HepG2 (cell line): ENCODE measurements at regions of chr6 and their contacts with region 1.

Region 1: GRCh38 chr6:138588805-138589434 is 89.6 kb upstream of the NHSL1 start:
- DNase-seq: peak; percentile 80
- ATAC-seq: peak; percentile 41
- H3K4me3 ChIP-seq: no peak overlapping the region
- H3K27ac ChIP-seq: no peak overlapping the region
- H3K4me1 ChIP-seq: peaks cover 61% of the 10 kb centered on the region
- H3K27me3 ChIP-seq: no peaks in the 10 kb centered on the region
- CTCF ChIP-seq: peak; percentile 94
- EP300 ChIP-seq: no peak
- POLR2A ChIP-seq: no peak
- RAD21 ChIP-seq: peak; percentile 86

Region 2: GRCh38 chr6:138115877-138116660 is 472.9 kb before region 1 on chr6:
- CTCF ChIA-PET with region 1: interaction called, 3 read pairs
- POLR2A ChIA-PET with region 1: no interaction called
- in situ Hi-C with region 1: loop called (anchors 5 kb)
- intact Hi-C with region 1: loop called (anchors 5 kb)
- DNase-seq: peak; percentile 71
- ATAC-seq: peak; percentile 96
- H3K4me3 ChIP-seq: 0 out of 6 replicates have a peak overlapping the region, but pooled peaks of 1 of the 3 experiments have one; percentile 2
- H3K27ac ChIP-seq: peak overlapping the region; percentile 13
- H3K4me1 ChIP-seq: peaks cover 18% of the 10 kb centered on the region
- H3K27me3 ChIP-seq: no peaks in the 10 kb centered on the region
- CTCF ChIP-seq: peak; percentile 90
- EP300 ChIP-seq: no peak
- POLR2A ChIP-seq: no peak
- RAD21 ChIP-seq: peak; percentile 92

Region 3: DNA sequence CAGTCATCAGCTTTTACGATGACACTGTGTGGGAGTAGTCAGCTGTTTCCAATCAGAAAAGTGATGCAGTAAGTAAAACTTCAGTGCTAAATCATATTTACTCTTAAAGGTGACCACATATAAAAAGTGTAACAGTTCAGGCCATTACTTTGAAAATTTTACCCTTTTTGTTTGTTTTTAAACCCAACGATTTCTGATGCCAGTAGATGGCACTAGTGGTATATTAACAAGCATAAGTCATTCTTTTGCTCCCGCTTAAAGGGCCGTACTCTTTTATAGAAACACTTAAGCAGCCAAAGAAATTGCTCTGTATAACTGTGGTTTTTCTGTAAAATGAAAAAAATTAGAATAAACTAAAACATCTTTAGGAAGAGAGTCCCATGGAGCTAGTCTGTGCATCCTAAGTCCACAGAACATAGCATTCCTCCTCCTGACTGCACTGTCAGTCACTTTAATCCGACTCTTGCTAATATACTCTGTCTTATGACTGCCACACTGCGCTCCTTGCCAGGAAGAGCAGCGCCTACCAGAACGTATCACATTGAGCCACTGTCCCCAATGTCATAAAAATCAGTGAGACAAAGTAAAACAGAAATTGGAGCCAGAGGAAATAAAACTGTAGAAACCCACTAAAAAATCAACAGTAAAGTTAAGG is 159.8 kb before region 1 on chr6:
- CTCF ChIA-PET with region 1: interaction called, 20 read pairs
- POLR2A ChIA-PET with region 1: no interaction called
- in situ Hi-C with region 1: loop called (anchors 5 kb)
- intact Hi-C with region 1: loop called (anchors 2 kb)
- DNase-seq: peak; percentile 62
- ATAC-seq: peak; percentile 26
- H3K4me3 ChIP-seq: no peak overlapping the region
- H3K27ac ChIP-seq: no peak overlapping the region
- H3K4me1 ChIP-seq: no peaks in the 10 kb centered on the region
- H3K27me3 ChIP-seq: no peaks in the 10 kb centered on the region
- CTCF ChIP-seq: peak; percentile 67
- EP300 ChIP-seq: no peak
- POLR2A ChIP-seq: no peak
- RAD21 ChIP-seq: peak; percentile 54; the same call in 1 of the 2 replicates

Region 4: DNA sequence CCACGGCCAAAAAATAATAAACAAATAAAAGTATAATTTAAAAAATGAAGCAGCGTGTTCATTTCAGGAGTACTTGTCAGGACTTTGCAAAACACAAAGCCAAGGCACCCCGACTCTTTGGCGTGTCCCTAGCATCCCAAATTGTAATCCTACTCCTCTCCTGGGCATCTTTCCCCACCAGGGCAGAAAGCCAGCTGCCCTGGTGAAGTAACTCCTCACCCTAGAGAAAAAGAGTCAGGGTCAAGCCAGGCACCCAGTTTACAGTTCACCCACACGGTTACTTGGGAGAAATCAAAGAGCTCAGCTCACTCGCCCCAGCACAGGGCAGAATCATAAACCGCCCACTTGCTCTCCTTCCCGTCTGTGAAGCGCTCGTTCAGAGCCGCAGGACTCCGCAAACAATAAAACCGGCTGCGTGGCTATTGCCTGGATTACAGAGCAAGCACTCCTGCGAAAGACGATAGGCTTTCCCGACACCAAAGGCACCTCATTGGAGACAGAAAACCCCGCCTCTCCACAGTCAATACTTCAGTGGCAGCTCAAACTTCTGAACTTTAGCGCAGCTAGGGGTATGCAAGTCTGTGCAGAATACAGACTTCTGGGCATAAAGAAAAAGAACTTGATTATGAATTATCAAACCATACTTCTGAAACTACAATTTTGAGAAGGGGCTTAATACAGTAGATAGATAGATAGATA is 16.6 kb before region 1 on chr6:
- CTCF ChIA-PET with region 1: no interaction called
- POLR2A ChIA-PET with region 1: interaction called, 17 read pairs
- in situ Hi-C with region 1: no loop called
- intact Hi-C with region 1: loop called (anchors 2 kb)
- DNase-seq: peak; percentile 97
- ATAC-seq: peak; percentile 94
- H3K4me3 ChIP-seq: peak overlapping the region; percentile 60 to 84 (median 64)
- H3K27ac ChIP-seq: peak overlapping the region; percentile 79
- H3K4me1 ChIP-seq: peaks cover 43% of the 10 kb centered on the region
- H3K27me3 ChIP-seq: no peaks in the 10 kb centered on the region; a peak in 2 of 5 replicates
- CTCF ChIP-seq: no peak
- EP300 ChIP-seq: 0 out of 4 replicates have a peak, but pooled peaks of 1 of the 2 experiments have one; percentile 37
- POLR2A ChIP-seq: peak; percentile 93 to 98
- RAD21 ChIP-seq: no peak

Region 5: DNA sequence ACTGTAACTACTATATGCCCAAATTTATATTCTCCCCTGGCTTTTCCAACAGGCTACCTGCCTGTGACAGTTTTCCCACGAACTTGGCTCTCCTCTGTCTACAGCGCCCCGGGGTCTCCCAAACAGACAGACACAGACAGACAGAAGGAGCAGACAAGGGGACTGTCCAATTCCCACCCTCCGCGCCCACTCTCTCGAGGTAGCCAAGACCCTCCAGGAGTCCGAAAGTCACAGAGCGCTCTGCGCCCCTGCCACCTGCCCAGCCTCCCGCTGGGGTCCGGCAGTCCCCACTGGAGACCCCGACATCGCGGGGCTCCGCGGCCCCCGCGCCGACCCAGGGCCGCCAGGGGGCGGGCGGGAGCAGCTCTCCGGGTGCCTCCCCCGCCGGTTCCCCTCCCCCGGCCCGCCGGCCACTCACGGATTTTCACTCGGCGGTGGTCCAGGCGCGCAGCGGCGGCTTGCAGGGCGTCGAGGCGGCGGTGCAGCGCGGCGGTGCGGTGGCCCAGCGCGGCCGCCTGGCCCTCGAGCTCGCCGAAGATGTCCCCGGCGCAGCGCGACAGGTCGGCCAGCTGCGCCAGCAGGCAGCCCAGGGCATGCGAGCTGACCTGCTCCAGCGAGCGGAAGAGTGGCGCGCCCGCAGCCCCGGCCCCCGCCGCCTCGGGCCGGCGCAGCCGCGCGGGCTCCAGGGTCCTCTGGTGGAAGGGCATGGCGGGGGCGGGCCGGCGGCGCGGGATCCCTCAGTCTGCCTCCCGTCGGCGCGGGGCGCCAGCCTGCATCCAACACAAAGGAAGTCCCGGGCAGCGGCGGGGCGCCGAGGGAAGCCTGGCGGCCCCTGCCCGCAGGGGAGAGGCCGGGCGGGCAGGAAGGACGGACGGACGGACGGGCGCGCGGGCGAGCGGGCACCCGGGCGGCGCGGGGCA is 103.4 kb after region 1 on chr6:
- CTCF ChIA-PET with region 1: interaction called, 3 read pairs
- POLR2A ChIA-PET with region 1: interaction called, 6 read pairs
- in situ Hi-C with region 1: no loop called
- intact Hi-C with region 1: loop called (anchors 1 kb)
- DNase-seq: peak; percentile 30
- ATAC-seq: peak; percentile 77
- H3K4me3 ChIP-seq: peak overlapping the region; percentile 87 to 94 (median 90)
- H3K27ac ChIP-seq: peak overlapping the region; percentile 25
- H3K4me1 ChIP-seq: peaks cover 20% of the 10 kb centered on the region
- H3K27me3 ChIP-seq: peaks cover 0 to 13% of the 10 kb centered on the region in 2 experiments; a peak in 1 of 5 replicates
- CTCF ChIP-seq: peak; percentile 80
- EP300 ChIP-seq: 0 out of 4 replicates have a peak, but pooled peaks of 1 of the 2 experiments have one; percentile 15
- POLR2A ChIP-seq: no peak; a peak in 1 of 4 replicates
- RAD21 ChIP-seq: peak; percentile 83

Region 6: DNA sequence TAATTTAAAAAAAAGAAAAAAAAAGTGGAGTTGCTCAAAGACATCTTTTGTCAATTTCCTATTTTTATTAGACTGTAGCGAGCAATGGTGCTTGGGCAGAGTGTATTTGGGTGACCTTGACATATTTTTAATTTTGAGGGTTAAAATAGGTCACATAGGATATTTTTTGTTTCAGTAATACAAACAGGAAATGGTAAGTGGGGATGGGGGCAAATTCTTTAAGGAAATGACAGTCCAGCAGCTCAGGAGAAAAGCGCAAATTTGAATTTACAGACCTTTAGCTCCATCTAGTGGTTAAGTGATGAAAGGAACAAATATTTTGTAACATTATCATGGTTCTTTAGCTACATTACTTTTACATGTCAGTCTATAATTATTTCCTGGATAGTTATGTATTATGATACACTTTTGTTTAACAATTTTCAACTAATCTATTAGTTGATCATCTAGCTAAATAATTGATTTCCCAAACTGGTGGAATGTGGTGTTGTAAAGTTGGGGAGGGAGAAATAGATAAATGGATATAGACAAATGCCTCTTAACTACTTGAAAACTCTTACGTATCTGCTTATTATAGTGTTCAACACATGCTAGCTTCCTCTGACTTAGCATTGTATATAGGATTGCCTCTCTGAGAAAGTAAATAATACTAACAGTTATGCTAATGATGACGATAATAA is 775.5 kb after region 1 on chr6:
- CTCF ChIA-PET with region 1: no interaction called
- POLR2A ChIA-PET with region 1: no interaction called
- in situ Hi-C with region 1: loop called (anchors 25 kb)
- intact Hi-C with region 1: loop called (anchors 2 kb)
- DNase-seq: no peak
- ATAC-seq: peak; percentile 60
- H3K4me3 ChIP-seq: no peak overlapping the region
- H3K27ac ChIP-seq: no peak overlapping the region
- H3K4me1 ChIP-seq: peaks cover 20% of the 10 kb centered on the region
- H3K27me3 ChIP-seq: 0 out of 5 replicates have a peak, but pooled peaks cover 0 to 8% of the 10 kb centered on the region in 2 experiments
- CTCF ChIP-seq: peak; percentile 81
- EP300 ChIP-seq: no peak
- POLR2A ChIP-seq: no peak
- RAD21 ChIP-seq: peak; percentile 88